ENCODE measurements at regions of chr14 and their contacts with region 1.

Region 1: DNA sequence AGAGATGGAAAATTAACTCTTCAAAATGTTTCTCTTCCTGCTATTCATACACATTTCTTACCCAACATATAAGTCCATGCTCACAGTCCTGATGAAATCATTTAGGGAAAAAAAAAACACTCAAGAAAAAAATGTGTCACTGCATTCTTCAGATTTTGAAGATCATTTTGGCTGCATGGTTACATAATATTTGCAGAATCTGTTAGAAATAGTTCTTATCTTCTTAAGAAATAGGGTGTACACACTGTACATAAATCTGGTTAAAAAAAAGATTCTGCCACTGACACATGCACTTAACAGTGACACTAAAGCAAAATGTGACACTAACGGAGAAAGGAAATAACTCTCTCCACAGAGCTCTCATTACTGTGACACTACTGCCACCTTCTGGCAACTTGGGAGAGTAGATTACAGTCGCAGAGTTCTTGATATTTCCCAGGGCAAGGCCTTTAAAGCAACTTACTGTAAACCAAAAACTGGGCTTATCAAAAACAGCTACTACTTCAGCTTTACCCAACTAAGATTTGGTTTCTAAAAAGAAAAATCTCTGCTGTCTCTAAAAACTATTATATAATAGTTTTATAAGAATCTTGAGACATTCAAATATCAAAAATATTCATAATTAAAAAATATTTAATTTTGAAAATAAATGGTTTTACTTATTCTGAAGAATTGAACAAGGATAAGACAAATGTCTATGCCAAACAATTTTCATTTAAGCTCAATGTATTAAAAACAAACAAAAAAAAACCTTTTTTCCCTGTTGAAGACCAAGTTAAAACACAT is 65.0 kb downstream of the SETD3 start:
- DNase-seq: peak; percentile 19 to 91 (median 52)
- ATAC-seq: peak; percentile 95
- H3K4me3 ChIP-seq: no peak overlapping the region
- H3K4me3 Mint-ChIP-seq: no peak overlapping the region
- H3K27ac ChIP-seq: no peak overlapping the region
- H3K27ac Mint-ChIP-seq: no peak overlapping the region
- H3K4me1 ChIP-seq: no peaks in the 10 kb centered on the region
- H3K4me1 Mint-ChIP-seq: peaks cover 11% of the 10 kb centered on the region
- H3K27me3 ChIP-seq: no peaks in the 10 kb centered on the region
- H3K27me3 Mint-ChIP-seq: no peaks in the 10 kb centered on the region
- CTCF ChIP-seq: peak; percentile 80

Region 2: DNA sequence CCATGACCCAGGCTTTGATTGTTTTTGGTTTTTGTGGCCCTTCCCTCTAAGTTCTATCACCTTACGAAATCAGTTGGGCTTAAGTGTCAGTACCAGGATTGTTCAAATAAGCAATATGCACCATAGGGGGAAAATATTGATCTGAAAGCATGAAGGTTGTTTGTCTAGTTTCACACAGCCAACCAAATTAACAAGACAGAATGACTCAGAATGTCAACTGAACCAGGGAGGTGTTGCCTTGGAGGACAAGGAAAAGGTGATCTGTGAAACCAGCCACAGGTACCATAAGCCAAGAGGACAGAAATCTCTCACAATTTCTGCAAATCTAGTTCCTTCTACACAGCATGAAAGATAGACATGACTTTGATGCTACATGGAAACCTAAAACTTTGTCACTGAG is 441.6 kb before region 1 on chr14:
- CTCF ChIA-PET with region 1: no interaction called
- POLR2A ChIA-PET with region 1: no interaction called
- intact Hi-C with region 1: no loop called
- DNase-seq: no peak
- ATAC-seq: no peak
- H3K4me3 ChIP-seq: no peak overlapping the region
- H3K4me3 Mint-ChIP-seq: no peak overlapping the region
- H3K27ac ChIP-seq: no peak overlapping the region
- H3K27ac Mint-ChIP-seq: no peak overlapping the region
- H3K4me1 ChIP-seq: no peaks in the 10 kb centered on the region
- H3K4me1 Mint-ChIP-seq: peaks cover 4% of the 10 kb centered on the region
- H3K27me3 ChIP-seq: no peaks in the 10 kb centered on the region
- H3K27me3 Mint-ChIP-seq: no peaks in the 10 kb centered on the region
- CTCF ChIP-seq: no peak

Region 3: DNA sequence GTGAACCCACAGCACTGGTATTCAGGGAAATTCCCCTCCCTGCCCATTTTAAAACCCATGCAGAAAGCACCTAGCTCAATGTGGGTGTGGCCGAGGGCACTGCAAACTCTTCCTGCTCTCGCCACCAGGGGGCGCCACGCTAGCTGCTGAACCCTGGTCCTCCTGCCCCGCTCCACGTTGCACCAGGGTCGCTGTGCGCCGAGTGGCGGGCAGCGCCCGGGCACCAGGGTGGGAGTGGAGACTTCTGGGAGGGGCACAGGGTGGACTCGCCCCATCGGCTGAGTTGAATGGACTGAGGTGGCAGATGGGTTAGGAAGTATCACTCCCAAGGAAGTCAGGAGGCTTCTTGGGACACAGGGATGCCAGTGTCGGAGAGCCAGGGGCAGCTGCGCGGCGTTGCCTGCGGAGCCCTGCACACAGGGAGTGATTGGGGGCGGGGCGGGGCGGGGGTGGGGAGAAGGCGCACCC is 95.5 kb before region 1 on chr14:
- CTCF ChIA-PET with region 1: no interaction called
- POLR2A ChIA-PET with region 1: no interaction called
- intact Hi-C with region 1: loop called (anchors 1 to 2 kb)
- DNase-seq: peak; percentile 40 to 86 (median 58)
- ATAC-seq: peak; percentile 88
- H3K4me3 ChIP-seq: no peak overlapping the region
- H3K4me3 Mint-ChIP-seq: no peak overlapping the region
- H3K27ac ChIP-seq: no peak overlapping the region
- H3K27ac Mint-ChIP-seq: no peak overlapping the region
- H3K4me1 ChIP-seq: peaks cover 10% of the 10 kb centered on the region
- H3K4me1 Mint-ChIP-seq: peaks cover 7% of the 10 kb centered on the region
- H3K27me3 ChIP-seq: no peaks in the 10 kb centered on the region
- H3K27me3 Mint-ChIP-seq: peaks cover under 1% of the 10 kb centered on the region
- CTCF ChIP-seq: peak; percentile 82

Region 4: DNA sequence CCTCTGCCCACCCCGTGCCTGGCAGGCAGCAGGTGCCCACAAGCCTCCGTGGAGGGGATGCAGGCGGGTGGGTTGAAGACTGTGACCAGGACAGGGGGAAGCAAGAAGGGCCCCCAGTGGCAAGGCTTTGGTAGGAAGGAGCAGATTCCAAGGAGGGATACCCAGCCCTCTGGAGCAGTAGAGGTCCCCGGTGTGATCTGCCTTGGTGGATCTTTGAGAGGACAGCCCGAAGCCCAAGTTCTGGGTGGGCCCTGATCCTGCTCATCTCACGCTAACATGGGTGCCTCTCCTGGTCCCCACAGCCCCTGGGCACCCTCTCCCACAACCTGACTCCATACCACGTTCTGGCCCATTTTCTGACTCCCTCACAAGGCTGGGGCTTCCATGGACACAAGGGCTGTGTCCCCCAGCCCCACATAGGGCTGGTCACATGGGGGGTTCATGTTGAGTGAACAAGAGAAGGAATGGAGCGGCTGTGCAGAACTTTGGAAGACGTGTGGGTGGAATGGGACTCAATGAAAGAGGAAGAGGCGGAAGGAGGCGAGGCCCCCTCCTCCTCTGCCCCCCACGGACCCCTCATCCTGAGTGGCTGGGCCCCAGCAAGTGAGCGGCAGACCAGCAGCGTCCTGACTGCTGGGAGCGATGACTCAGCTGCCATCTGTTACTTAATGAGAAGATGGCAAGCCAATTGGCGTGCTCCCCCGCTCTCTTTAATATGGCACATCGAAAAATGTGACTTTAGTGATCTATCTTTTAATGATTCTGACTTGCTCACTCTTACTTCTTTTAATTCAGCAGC is 66.7 kb before region 1 on chr14:
- CTCF ChIA-PET with region 1: no interaction called
- POLR2A ChIA-PET with region 1: no interaction called
- intact Hi-C with region 1: no loop called
- DNase-seq: no peak
- ATAC-seq: no peak
- H3K4me3 ChIP-seq: no peak overlapping the region
- H3K4me3 Mint-ChIP-seq: no peak overlapping the region
- H3K27ac ChIP-seq: no peak overlapping the region
- H3K27ac Mint-ChIP-seq: no peak overlapping the region
- H3K4me1 ChIP-seq: no peaks in the 10 kb centered on the region
- H3K4me1 Mint-ChIP-seq: no peaks in the 10 kb centered on the region
- H3K27me3 ChIP-seq: peaks cover 0 to 2% of the 10 kb centered on the region in 2 experiments
- H3K27me3 Mint-ChIP-seq: peaks cover 8% of the 10 kb centered on the region
- CTCF ChIP-seq: no peak

Region 5: GRCh38 chr14:99393047-99393655 is 22.5 kb before region 1 on chr14:
- CTCF ChIA-PET with region 1: interaction called, 19 read pairs
- POLR2A ChIA-PET with region 1: no interaction called
- intact Hi-C with region 1: no loop called
- DNase-seq: peak in 9 of 14 experiments; percentile 6 to 53 (median 25)
- ATAC-seq: peak; percentile 55
- H3K4me3 ChIP-seq: no peak overlapping the region
- H3K4me3 Mint-ChIP-seq: no peak overlapping the region
- H3K27ac ChIP-seq: no peak overlapping the region
- H3K27ac Mint-ChIP-seq: no peak overlapping the region
- H3K4me1 ChIP-seq: peaks cover 10% of the 10 kb centered on the region
- H3K4me1 Mint-ChIP-seq: peaks cover 21% of the 10 kb centered on the region
- H3K27me3 ChIP-seq: no peaks in the 10 kb centered on the region
- H3K27me3 Mint-ChIP-seq: no peaks in the 10 kb centered on the region
- CTCF ChIP-seq: peak; percentile 77

Measured in CD4-positive, alpha-beta T cell (primary cell).